SK-N-SH (cell line): ENCODE measurements at regions of chr17 and their contacts with region 1.

Region 1: DNA sequence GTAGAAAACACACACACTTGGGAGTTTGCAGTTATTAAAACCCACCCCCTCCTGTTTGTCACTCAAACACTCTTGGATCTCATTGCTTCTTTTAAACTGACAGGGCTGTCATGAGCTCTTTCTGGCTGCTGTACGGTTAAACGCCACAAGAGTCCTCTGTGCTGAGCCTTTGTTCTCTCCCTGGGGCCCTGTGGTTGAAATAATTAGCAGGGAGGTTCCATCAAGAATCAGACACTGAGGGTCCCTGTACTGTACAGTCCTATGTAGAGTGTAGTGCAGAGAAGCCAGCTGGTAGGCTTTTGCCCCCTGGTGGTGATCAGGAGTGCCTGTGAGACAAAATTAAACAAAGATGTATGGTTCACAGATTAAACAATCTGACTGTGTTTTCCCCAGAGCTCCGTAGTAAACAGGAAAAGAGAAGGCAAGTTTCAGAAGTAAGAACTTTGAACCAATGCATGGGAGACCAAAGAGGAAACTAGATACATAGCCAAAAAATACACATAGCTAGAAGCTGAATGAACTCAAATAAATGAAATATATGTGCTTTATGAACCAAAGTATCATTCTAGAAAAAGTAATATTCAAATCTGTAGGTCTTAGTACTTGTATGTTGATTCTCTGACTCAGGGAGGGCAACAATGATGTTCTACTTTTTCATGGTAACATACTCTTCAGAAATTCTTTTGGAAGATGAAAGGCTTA is 1.4 kb upstream of the SSH2 start:
- DNase-seq: peak; percentile 75
- H3K4me3 ChIP-seq: peak overlapping the region; percentile 84 to 99
- H3K27ac ChIP-seq: peak overlapping the region; percentile 80 to 83
- H3K4me1 ChIP-seq: peaks cover 21 to 24% of the 10 kb centered on the region in 2 experiments; a peak in 3 of 4 replicates
- H3K27me3 ChIP-seq: no peaks in the 10 kb centered on the region
- CTCF ChIP-seq: peak; percentile 96
- EP300 ChIP-seq: no peak
- RAD21 ChIP-seq: peak; percentile 93

Region 2: DNA sequence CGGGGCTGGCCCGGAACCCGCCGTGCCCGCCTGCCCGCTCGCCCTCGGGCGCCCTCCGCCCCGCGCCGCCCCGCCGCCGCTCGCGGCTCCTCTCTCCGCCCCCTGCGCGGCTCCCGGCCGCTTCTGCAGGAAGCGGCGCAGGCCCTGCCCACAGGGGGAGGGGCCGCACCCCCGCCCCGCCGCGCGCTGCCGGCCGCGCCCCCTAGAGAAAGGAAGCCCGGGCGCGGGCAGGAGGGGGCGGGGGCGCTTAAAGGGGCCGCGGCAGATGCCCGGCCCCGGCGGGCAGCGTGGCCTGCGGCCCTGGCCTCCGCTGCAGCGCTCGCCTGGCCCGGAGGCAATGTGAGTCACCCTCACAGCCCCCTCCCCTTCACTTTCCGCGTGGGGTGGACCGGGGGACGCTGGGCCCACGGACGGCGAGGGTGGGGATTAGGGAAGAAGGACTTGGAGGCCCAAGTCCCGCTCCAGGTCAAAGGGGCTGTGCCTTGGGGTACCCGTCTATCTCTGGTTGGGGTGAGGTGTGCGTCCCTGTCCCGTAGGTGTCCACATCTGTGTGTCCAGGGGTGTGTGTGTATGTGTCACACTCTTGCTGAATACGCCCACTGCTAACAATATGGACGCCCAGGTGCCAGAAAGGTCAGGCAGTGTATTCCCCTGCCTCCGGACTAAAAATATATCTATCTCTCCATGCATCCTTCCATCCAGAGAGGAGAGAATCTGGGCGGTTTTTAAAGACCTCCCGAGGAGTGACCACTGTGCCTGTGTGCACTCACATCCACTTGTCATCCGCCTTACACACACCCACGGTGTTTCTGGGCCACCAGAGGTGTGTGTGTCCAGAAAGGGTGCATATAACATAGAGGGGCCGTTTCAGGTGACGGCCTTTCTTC is 341.6 kb before region 1 on chr17 and contains the start of gene GIT1:
- CTCF ChIA-PET with region 1: interaction called, 25 read pairs
- POLR2A ChIA-PET with region 1: interaction called, 5 read pairs
- DNase-seq: peak; percentile 98
- H3K4me3 ChIP-seq: peak within 1 kb of the TSS; percentile 89 to 91
- H3K27ac ChIP-seq: peak within 1 kb of the TSS; percentile 64 to 91
- H3K4me1 ChIP-seq: peaks cover 41 to 65% of the 10 kb centered on the region in 2 experiments
- H3K27me3 ChIP-seq: no peaks in the 10 kb centered on the region
- CTCF ChIP-seq: no peak
- EP300 ChIP-seq: no peak
- RAD21 ChIP-seq: no peak
- polyA plus RNA-seq, gene GIT1: 39.4 and 42.9 TPM in 2 replicates

Region 3: DNA sequence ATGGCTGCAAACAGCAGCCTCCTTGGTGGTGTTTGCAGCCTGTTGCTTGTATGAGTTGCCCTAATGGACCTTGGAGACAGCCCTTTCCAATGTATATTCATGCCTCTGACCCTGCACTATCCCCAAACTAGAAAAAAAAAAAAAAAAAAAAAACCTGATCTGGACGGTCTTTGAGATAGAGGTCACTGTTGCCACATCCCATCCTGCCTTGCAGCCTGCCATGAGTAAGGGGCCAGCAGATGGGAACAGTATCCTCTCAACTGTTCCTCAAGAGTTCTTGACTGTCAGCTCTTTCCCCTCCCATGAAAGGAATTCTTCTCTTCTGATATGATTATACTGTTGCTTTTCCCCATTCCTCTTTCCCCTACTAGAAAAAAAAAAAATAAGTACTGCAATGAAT is 153.7 kb before region 1 on chr17:
- CTCF ChIA-PET with region 1: interaction called, 13 read pairs
- POLR2A ChIA-PET with region 1: no interaction called
- DNase-seq: no peak
- H3K4me3 ChIP-seq: no peak overlapping the region
- H3K27ac ChIP-seq: peak overlapping the region in 1 of 2 experiments; percentile 29; a peak in 1 of 4 replicates
- H3K4me1 ChIP-seq: peaks cover 0 to 11% of the 10 kb centered on the region in 2 experiments; a peak in 2 of 4 replicates
- H3K27me3 ChIP-seq: no peaks in the 10 kb centered on the region
- CTCF ChIP-seq: no peak
- EP300 ChIP-seq: no peak
- RAD21 ChIP-seq: no peak

Region 4: GRCh38 chr17:29821897-29822296 is 109.5 kb before region 1 on chr17:
- CTCF ChIA-PET with region 1: interaction called, 14 read pairs
- POLR2A ChIA-PET with region 1: no interaction called
- DNase-seq: no peak
- H3K4me3 ChIP-seq: no peak overlapping the region
- H3K27ac ChIP-seq: no peak overlapping the region
- H3K4me1 ChIP-seq: no peaks in the 10 kb centered on the region
- H3K27me3 ChIP-seq: no peaks in the 10 kb centered on the region
- CTCF ChIP-seq: no peak
- EP300 ChIP-seq: no peak
- RAD21 ChIP-seq: no peak

Region 5: DNA sequence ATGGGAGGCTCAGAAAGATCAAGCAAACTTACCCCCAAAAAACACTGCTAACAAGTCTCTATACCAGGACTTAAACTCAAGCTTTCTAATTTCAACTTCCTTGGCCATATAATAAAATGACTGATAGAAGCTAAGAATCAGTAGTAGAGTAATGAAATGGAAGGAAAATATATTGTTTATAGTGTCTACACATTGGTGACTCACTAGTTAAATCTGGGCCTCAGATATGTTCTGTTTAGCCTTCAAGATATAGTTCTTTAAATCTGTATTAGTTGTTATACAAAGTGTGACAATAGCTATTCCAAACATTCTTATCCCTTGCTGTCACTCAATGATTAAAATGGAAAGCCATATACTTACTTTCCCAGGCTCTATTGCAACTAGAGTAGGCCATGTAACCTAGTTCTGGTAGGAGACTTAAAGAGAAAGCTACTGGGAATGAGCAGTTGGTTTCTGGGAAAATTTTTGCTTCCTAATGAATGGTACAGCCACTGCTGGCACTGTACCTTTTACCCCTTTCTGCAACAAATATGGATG is 19.7 kb before region 1 on chr17:
- CTCF ChIA-PET with region 1: interaction called, 19 read pairs
- POLR2A ChIA-PET with region 1: no interaction called
- DNase-seq: no peak
- H3K4me3 ChIP-seq: no peak overlapping the region
- H3K27ac ChIP-seq: 0 out of 4 replicates have a peak overlapping the region, but pooled peaks of 1 of the 2 experiments have one; percentile 16
- H3K4me1 ChIP-seq: no peaks in the 10 kb centered on the region; a peak in 1 of 4 replicates
- H3K27me3 ChIP-seq: no peaks in the 10 kb centered on the region
- CTCF ChIP-seq: no peak
- EP300 ChIP-seq: no peak
- RAD21 ChIP-seq: no peak

Region 6: DNA sequence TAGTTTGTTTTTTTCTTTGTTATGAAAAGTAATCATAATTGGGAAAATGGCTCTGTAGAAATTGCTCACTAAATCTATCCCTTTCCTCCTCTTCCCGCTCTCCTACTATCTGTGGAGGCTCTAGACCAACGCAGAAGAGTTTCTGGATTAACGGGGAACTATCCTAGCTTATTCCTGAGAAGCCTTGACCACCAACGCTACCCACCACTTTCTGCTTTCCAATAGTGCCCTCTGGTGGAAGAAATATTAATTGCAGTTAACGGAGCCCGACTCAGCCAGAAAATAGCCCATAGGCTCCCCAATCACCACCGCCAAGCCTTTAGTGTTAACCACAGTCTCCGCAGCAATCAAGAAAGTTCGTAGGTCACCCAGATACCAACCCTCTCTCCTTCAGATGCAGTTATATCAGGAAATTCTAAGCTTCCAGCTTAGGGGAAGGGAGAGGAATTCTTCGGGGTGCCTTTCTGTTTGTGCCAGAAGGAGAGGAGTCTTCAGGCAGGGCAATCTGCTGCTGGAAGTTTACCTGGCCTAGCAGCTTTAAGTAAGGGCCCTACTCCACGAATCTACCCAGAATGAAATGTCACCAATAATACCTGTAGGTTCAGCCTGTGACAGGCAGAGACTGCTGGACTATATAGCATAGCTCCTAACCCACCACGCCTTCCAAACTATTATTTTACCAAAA is 162.2 kb after region 1 on chr17:
- CTCF ChIA-PET with region 1: interaction called, 35 read pairs
- POLR2A ChIA-PET with region 1: no interaction called
- DNase-seq: peak; percentile 76
- H3K4me3 ChIP-seq: peak overlapping the region in 1 of 2 experiments; percentile 30; a peak in 1 of 4 replicates
- H3K27ac ChIP-seq: no peak overlapping the region
- H3K4me1 ChIP-seq: peaks cover 0 to 31% of the 10 kb centered on the region in 2 experiments; a peak in 2 of 4 replicates
- H3K27me3 ChIP-seq: no peaks in the 10 kb centered on the region
- CTCF ChIP-seq: peak; percentile 85
- EP300 ChIP-seq: no peak
- RAD21 ChIP-seq: peak; percentile 94

Region 7: DNA sequence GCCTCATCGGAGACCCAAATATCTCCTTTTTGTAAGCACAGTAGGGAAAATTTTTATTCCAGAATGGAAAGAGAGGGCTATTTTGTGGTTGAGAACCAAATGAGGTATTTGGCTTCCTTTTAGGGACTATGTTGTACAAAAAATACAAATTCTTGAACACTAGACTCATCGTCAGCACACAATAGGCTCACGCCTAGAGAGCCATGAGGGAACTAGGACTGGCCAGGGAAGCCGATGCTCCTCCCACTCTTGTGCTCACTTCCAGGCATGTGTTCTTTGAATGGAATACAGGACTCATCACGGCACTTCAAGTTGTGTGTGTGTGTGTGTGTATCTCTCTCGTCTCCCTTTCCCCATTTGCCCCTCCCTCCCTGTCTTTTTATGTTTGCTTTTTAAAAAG is 378.2 kb after region 1 on chr17:
- CTCF ChIA-PET with region 1: no interaction called
- POLR2A ChIA-PET with region 1: no interaction called
- DNase-seq: no peak
- H3K4me3 ChIP-seq: no peak overlapping the region
- H3K27ac ChIP-seq: no peak overlapping the region
- H3K4me1 ChIP-seq: no peaks in the 10 kb centered on the region
- H3K27me3 ChIP-seq: no peaks in the 10 kb centered on the region
- CTCF ChIP-seq: no peak
- EP300 ChIP-seq: no peak
- RAD21 ChIP-seq: no peak